ENCODE measurements at regions of chr11 and their contacts with region 1.

Region 1: DNA sequence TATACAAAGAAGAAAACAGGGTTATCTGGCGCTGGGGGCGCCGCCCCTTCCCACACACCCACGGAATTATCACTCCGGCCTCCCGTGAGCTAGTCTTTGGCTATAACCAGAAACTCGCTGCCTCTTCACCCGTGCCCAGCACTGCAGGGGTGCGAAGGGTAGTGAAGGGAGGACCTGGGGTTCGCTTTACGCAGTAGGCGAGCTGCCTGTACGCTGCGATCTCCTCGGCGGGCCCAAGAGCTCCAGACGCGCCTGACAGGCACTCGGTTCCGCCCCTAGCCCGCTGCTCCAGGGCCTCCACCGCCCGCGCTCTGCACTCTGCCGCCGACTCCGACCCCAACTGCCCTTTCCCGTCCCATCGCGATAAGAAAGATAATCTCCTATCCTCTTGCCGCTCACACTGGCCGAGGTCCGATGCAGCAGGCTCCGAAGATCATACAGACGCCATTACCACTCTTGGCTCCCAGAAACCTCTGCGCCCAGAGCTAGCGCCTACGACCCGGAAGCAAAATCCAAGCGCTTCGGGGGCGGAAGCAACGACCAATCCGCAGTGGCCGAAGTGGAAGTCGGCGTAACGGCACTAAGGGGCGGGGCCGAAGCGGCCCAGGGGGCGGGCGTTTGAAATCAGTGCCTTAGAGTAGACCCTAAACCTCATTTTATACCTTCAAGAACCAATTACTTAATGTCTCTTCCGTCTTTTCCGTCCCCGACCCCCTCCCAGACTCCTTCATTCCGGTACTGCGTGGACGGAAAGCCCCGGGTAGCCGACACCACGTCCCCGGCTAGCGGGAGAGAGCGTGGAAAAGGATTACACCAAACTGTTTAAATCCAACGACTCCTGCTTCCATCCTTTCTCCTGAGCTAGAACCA is at the starts of genes CWC15 and KDM4D:
- DNase-seq: peak; percentile 96
- CTCF ChIP-seq: no peak

Region 2: GRCh38 chr11:94959179-94959578 is 14.2 kb before region 1 on chr11:
- CTCF ChIA-PET with region 1: interaction called, 13 read pairs
- POLR2A ChIA-PET with region 1: no interaction called
- DNase-seq: no peak
- CTCF ChIP-seq: no peak

Region 3: GRCh38 chr11:94993400-94993943 is 20.1 kb after region 1 on chr11:
- CTCF ChIA-PET with region 1: no interaction called
- POLR2A ChIA-PET with region 1: no interaction called
- DNase-seq: no peak
- CTCF ChIP-seq: no peak